GM12878 (cell line): ENCODE measurements at regions of chr11 and their contacts with region 1.

Region 1: DNA sequence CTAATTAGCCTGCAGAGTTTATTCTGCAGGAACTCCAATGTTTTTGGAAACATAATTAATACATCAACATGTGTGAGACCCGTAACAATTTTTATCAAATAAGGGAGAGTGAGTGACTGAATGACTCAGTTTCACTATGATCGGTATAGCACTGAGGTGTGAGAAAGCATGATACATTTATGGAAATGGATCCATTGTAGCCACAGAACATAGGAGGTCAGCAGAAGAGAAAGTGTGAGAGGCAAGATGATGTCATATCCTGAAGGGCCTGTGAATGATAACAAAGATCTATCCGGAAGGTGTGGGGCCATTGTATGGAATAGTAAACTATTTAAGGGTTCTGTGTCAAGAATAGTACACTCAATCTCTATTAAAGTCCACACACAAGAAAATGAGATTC is 1406.2 kb upstream of the TENM4 start:
- DNase-seq: peak; percentile 67
- ATAC-seq: peak; percentile 90
- H3K4me3 ChIP-seq: no peak overlapping the region
- H3K27ac ChIP-seq: no peak overlapping the region
- H3K4me1 ChIP-seq: peaks cover 7% of the 10 kb centered on the region
- H3K27me3 ChIP-seq: no peaks in the 10 kb centered on the region
- CTCF ChIP-seq: no peak
- EP300 ChIP-seq: peak in 1 of 2 experiments; percentile 80; a peak in 2 of 4 replicates
- POLR2A ChIP-seq: no peak
- RAD21 ChIP-seq: no peak

Region 2: DNA sequence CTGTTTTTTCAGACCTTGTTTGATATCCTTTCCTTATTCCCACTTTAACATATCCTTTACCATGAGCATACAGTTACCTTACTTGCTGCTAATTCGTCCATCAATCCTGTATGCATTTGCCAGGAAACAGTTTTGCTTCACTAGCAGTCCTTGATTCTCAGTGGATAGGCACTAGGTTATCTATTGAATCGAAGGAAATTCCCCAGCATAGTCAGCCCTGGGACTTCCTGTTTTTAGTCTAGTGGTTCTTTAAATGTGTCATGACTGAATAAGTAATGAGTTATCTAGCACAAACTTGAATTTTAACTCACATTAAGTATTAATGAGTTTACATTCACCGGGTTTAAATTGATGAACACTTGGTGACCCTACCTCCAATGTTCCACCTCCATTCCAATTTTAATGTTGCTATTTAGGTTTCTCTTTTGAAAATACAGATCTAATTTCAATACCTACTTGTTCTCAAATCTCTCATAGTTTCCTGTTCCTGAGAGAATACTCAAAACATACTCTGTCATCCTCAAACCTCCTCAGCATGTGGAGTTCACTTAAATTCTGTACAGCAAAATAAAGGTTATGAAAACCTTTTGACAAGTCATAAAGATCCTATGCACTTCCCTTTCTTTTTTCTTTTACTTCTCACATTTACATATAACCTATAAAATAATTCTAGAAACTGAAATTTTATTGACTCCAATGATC is 31.1 kb before region 1 on chr11:
- CTCF ChIA-PET with region 1: interaction called, 7 read pairs
- POLR2A ChIA-PET with region 1: interaction called, 6 read pairs
- RAD21 ChIA-PET with region 1: interaction called, 8 read pairs
- SMC1A ChIA-PET with region 1: interaction called, 22 read pairs
- in situ Hi-C with region 1: no loop called
- intact Hi-C with region 1: loop called (anchors 2 kb)
- DNase-seq: peak; percentile 69
- ATAC-seq: peak; percentile 88
- H3K4me3 ChIP-seq: peak overlapping the region; percentile 28; the same call in 1 of the 2 replicates
- H3K27ac ChIP-seq: peak overlapping the region; percentile 79
- H3K4me1 ChIP-seq: peaks cover 17% of the 10 kb centered on the region
- H3K27me3 ChIP-seq: no peaks in the 10 kb centered on the region
- CTCF ChIP-seq: no peak
- EP300 ChIP-seq: peak; percentile 52 to 63; a peak in 3 of 4 replicates
- POLR2A ChIP-seq: no peak
- RAD21 ChIP-seq: no peak

Region 3: GRCh38 chr11:80822308-80822707 is 24.7 kb before region 1 on chr11:
- CTCF ChIA-PET with region 1: interaction called, 7 read pairs
- POLR2A ChIA-PET with region 1: interaction called, 9 read pairs
- RAD21 ChIA-PET with region 1: interaction called, 8 read pairs
- SMC1A ChIA-PET with region 1: interaction called, 22 read pairs
- in situ Hi-C with region 1: no loop called
- intact Hi-C with region 1: loop called (anchors 2 kb)
- DNase-seq: no peak
- ATAC-seq: no peak
- H3K4me3 ChIP-seq: no peak overlapping the region
- H3K27ac ChIP-seq: no peak overlapping the region
- H3K4me1 ChIP-seq: no peaks in the 10 kb centered on the region
- H3K27me3 ChIP-seq: no peaks in the 10 kb centered on the region
- CTCF ChIP-seq: no peak
- EP300 ChIP-seq: no peak
- POLR2A ChIP-seq: no peak
- RAD21 ChIP-seq: no peak

Region 4: DNA sequence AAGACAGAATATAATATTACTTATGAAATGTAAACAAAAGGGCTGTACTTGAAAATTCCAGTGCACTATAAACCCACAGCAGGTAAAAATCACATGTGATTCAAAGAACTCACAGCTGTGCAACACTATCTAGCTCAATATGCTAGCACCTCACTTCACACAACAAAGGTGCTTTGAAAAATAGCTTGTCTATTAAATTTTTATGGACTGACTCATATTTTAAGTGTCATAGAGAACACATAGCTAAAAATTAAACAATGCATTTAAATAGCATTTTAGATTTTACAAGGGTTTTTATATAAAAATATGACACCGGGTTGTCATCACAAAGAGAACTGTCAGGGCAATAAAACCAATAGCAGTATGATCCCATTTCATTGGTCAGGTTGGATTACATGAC is 15.6 kb before region 1 on chr11:
- CTCF ChIA-PET with region 1: interaction called, 3 read pairs
- POLR2A ChIA-PET with region 1: no interaction called
- RAD21 ChIA-PET with region 1: interaction called, 4 read pairs
- SMC1A ChIA-PET with region 1: interaction called, 21 read pairs
- in situ Hi-C with region 1: no loop called
- intact Hi-C with region 1: no loop called
- DNase-seq: no peak
- ATAC-seq: no peak
- H3K4me3 ChIP-seq: no peak overlapping the region
- H3K27ac ChIP-seq: no peak overlapping the region
- H3K4me1 ChIP-seq: no peaks in the 10 kb centered on the region
- H3K27me3 ChIP-seq: no peaks in the 10 kb centered on the region
- CTCF ChIP-seq: no peak
- EP300 ChIP-seq: no peak
- POLR2A ChIP-seq: no peak
- RAD21 ChIP-seq: no peak

Region 5: GRCh38 chr11:80860632-80861031 is 13.7 kb after region 1 on chr11:
- CTCF ChIA-PET with region 1: interaction called, 3 read pairs
- POLR2A ChIA-PET with region 1: no interaction called
- RAD21 ChIA-PET with region 1: interaction called, 4 read pairs
- SMC1A ChIA-PET with region 1: interaction called, 10 read pairs
- in situ Hi-C with region 1: no loop called
- intact Hi-C with region 1: no loop called
- DNase-seq: no peak
- ATAC-seq: peak; percentile 44; the same call in 2 of the 3 replicates
- H3K4me3 ChIP-seq: no peak overlapping the region
- H3K27ac ChIP-seq: no peak overlapping the region
- H3K4me1 ChIP-seq: no peaks in the 10 kb centered on the region
- H3K27me3 ChIP-seq: no peaks in the 10 kb centered on the region; a peak in 1 of 4 replicates
- CTCF ChIP-seq: no peak
- EP300 ChIP-seq: no peak
- POLR2A ChIP-seq: no peak
- RAD21 ChIP-seq: no peak

Region 6: GRCh38 chr11:80873309-80873999 is 26.5 kb after region 1 on chr11:
- CTCF ChIA-PET with region 1: no interaction called
- POLR2A ChIA-PET with region 1: no interaction called
- RAD21 ChIA-PET with region 1: no interaction called
- SMC1A ChIA-PET with region 1: interaction called, 10 read pairs
- in situ Hi-C with region 1: no loop called
- intact Hi-C with region 1: no loop called
- DNase-seq: peak; percentile 7
- ATAC-seq: peak; percentile 94
- H3K4me3 ChIP-seq: no peak overlapping the region
- H3K27ac ChIP-seq: no peak overlapping the region
- H3K4me1 ChIP-seq: no peaks in the 10 kb centered on the region; the same call in 1 of the 2 replicates
- H3K27me3 ChIP-seq: no peaks in the 10 kb centered on the region; a peak in 1 of 4 replicates
- CTCF ChIP-seq: no peak
- EP300 ChIP-seq: no peak
- POLR2A ChIP-seq: no peak
- RAD21 ChIP-seq: no peak